ENCODE measurements at regions of chrX and their contacts with region 1.

Region 1: GRCh38 chrX:27186664-27187063 is 276.5 kb downstream of the PPP4R3C start:
- DNase-seq: peak; percentile 31
- H3K4me3 Mint-ChIP-seq: no peak overlapping the region
- H3K27ac Mint-ChIP-seq: no peak overlapping the region
- H3K4me1 Mint-ChIP-seq: no peaks in the 10 kb centered on the region
- H3K27me3 Mint-ChIP-seq: no peaks in the 10 kb centered on the region
- CTCF ChIP-seq: peak; percentile 57

Region 2: DNA sequence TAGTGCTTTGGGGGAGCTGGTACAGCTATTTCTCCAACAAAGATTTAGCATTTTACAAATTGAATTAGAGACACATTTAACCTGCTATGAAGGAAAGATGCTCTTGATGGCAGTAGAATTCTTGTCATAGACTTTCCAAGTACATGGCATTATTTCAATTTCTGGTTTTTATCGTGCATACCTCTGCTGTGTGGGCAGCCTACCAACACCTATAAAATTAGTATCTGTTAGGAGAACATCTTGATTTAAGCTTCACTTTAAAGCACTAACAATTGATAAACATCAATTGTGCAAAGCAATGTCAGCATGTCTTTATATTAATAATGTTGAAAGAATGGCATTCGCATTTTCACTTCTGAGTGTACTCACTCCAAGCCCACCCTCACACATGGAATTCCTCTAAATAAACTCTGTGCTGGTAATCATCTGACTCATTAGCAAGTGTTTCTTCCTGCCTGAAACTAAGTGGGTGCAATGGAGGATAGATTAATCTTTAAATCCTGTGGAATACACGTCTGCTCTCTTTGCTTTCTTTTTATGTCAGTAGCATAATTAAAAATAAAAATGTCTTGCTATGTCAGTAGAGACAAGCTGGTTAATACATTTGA is 1328.3 kb before region 1 on chrX:
- CTCF ChIA-PET with region 1: interaction called, 3 read pairs
- intact Hi-C with region 1: loop called (anchors 10 kb)
- DNase-seq: no peak
- H3K4me3 Mint-ChIP-seq: no peak overlapping the region
- H3K27ac Mint-ChIP-seq: no peak overlapping the region
- H3K4me1 Mint-ChIP-seq: peaks cover 11% of the 10 kb centered on the region
- H3K27me3 Mint-ChIP-seq: no peaks in the 10 kb centered on the region
- CTCF ChIP-seq: no peak

Region 3: GRCh38 chrX:26442340-26442739 is 744.3 kb before region 1 on chrX:
- CTCF ChIA-PET with region 1: no interaction called
- intact Hi-C with region 1: loop called (anchors 1 kb)
- DNase-seq: peak; percentile 23
- H3K4me3 Mint-ChIP-seq: no peak overlapping the region
- H3K27ac Mint-ChIP-seq: no peak overlapping the region
- H3K4me1 Mint-ChIP-seq: peaks cover 9% of the 10 kb centered on the region
- H3K27me3 Mint-ChIP-seq: no peaks in the 10 kb centered on the region
- CTCF ChIP-seq: peak; percentile 20

Region 4: GRCh38 chrX:26649534-26649933 is 537.1 kb before region 1 on chrX:
- CTCF ChIA-PET with region 1: no interaction called
- intact Hi-C with region 1: loop called (anchors 10 kb)
- DNase-seq: no peak
- H3K4me3 Mint-ChIP-seq: no peak overlapping the region
- H3K27ac Mint-ChIP-seq: no peak overlapping the region
- H3K4me1 Mint-ChIP-seq: no peaks in the 10 kb centered on the region
- H3K27me3 Mint-ChIP-seq: no peaks in the 10 kb centered on the region
- CTCF ChIP-seq: peak; percentile 46

Region 5: GRCh38 chrX:26788402-26788998 is 398.2 kb before region 1 on chrX:
- CTCF ChIA-PET with region 1: interaction called, 4 read pairs
- intact Hi-C with region 1: loop called (anchors 5 kb)
- DNase-seq: no peak
- H3K4me3 Mint-ChIP-seq: no peak overlapping the region
- H3K27ac Mint-ChIP-seq: peak overlapping the region; percentile 54
- H3K4me1 Mint-ChIP-seq: peaks cover 30% of the 10 kb centered on the region
- H3K27me3 Mint-ChIP-seq: no peaks in the 10 kb centered on the region
- CTCF ChIP-seq: no peak

Region 6: GRCh38 chrX:26851981-26852380 is 334.7 kb before region 1 on chrX:
- CTCF ChIA-PET with region 1: no interaction called
- intact Hi-C with region 1: loop called (anchors 2 kb)
- DNase-seq: peak; percentile 2
- H3K4me3 Mint-ChIP-seq: no peak overlapping the region
- H3K27ac Mint-ChIP-seq: no peak overlapping the region
- H3K4me1 Mint-ChIP-seq: no peaks in the 10 kb centered on the region
- H3K27me3 Mint-ChIP-seq: no peaks in the 10 kb centered on the region
- CTCF ChIP-seq: no peak

Region 7: DNA sequence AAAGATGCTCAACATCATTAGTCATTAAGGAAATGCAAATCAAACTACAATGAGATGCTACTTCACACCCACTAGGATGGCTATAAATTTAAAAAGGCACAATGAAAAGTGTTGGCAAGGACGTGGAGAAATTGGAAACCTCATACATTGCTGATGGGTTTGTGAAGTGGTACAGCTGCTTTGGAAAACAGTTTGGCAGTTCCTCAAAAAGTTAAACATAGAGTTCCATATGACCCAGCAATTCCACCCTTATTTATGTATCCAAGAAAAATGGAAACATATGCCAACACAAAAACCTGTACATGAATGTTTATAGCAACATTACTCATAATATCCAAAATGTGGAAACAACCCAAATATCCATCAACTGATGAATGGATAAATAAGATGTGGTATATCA is 519.9 kb after region 1 on chrX:
- CTCF ChIA-PET with region 1: no interaction called
- intact Hi-C with region 1: no loop called
- DNase-seq: no peak
- H3K4me3 Mint-ChIP-seq: no peak overlapping the region
- H3K27ac Mint-ChIP-seq: no peak overlapping the region
- H3K4me1 Mint-ChIP-seq: no peaks in the 10 kb centered on the region
- H3K27me3 Mint-ChIP-seq: no peaks in the 10 kb centered on the region
- CTCF ChIP-seq: no peak

Region 8: DNA sequence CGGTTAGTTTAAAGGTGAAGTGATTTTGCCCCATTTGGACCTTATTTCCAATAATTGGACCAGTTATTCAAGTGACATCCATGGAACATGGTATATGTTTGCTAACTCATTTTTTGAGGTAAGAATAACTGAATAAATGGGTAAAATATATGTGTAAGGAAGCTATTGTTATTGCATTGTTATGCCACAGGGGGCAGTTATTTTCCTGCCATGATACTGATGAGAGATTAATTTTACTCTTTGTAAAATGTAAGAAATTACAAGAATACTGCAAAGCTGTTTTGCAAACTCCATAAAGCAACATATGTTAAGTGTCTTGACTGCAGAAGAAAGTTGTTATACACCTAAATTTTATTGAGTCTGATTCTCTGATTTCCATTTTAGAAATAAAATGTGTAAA is 1514.6 kb after region 1 on chrX:
- CTCF ChIA-PET with region 1: no interaction called
- intact Hi-C with region 1: no loop called
- DNase-seq: no peak
- H3K4me3 Mint-ChIP-seq: no peak overlapping the region
- H3K27ac Mint-ChIP-seq: no peak overlapping the region
- H3K4me1 Mint-ChIP-seq: no peaks in the 10 kb centered on the region
- H3K27me3 Mint-ChIP-seq: no peaks in the 10 kb centered on the region
- CTCF ChIP-seq: no peak

Measured in Calu3 (cell line).